Gastrocnemius medialis (tissue), 4 donors: ENCODE measurements at regions of chr11 and their contacts with region 1.

Region 1: DNA sequence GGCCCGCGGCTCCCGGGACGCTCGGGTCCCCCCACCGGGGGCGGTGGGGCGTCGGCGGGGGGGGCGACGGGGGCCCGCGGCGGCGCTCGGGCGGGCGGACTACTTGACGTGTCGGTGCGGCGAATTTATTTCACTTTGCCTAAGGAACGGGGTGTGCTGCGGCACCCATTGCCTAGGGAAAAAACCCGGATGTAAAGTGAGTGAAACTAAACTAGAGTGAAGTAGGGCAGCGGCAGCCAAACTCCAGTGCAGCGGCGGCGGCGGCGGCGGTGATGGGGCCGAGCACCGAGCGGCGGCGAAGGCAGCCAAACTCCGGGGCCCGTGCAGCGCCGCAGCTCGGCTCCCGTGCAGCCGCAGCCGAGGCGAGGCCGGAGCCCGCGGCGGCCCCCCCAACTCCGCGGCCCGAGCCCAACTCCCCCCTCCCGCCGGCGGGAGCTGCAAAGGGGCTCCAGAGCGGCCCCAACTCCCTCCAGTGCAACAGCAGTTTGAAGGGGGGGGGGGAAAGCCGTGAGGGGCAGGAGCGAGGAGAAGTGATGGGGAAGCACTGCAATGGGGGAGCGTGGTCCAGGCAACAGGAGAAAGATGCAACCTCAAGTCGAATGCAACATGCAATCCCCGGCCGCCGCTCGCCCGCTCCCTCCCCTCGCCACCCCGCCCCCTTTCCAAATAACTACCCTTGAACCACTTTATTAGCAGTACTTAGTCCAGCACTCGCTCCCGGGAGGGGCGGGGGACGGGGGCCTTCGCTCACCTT is 647 bp upstream of the PHF21A start:
- DNase-seq: peak; percentile 75 to 82
- ATAC-seq: peak; percentile 55 to 64
- H3K4me3 ChIP-seq: peak overlapping the region; percentile 65 to 88 (median 79)
- H3K27ac ChIP-seq: peak overlapping the region; percentile 96 to 100 (median 98)
- H3K4me1 ChIP-seq: peaks cover 25 to 29% of the 10 kb centered on the region in 2 donors
- H3K27me3 ChIP-seq: no peaks in the 10 kb centered on the region
- CTCF ChIP-seq: peak in 1 of 5 experiments; percentile 14
- POLR2A ChIP-seq: peak in 1 of 2 donors; percentile 24

Region 2: GRCh38 chr11:45804761-45805304 is 317.1 kb before region 1 on chr11 and contains the start of gene SLC35C1:
- in situ Hi-C with region 1: no loop called
- intact Hi-C with region 1: loop called (anchors 1 kb)
- DNase-seq: peak; percentile 96
- ATAC-seq: peak; percentile 87
- H3K4me3 ChIP-seq: peak within 1 kb of the TSS; percentile 76 to 96 (median 86)
- H3K27ac ChIP-seq: peak within 1 kb of the TSS; percentile 86 to 94 (median 91)
- H3K4me1 ChIP-seq: peaks cover 28 to 29% of the 10 kb centered on the region in 2 donors
- H3K27me3 ChIP-seq: no peaks in the 10 kb centered on the region
- CTCF ChIP-seq: peak in 4 of 5 experiments; percentile 25 to 48 (median 34)
- POLR2A ChIP-seq: peak; percentile 88 to 94
- total RNA-seq, gene SLC35C1: 4.8 to 11.7 (median 7.8) TPM

Region 3: GRCh38 chr11:45859661-45860140 is 262.2 kb before region 1 on chr11:
- in situ Hi-C with region 1: no loop called
- intact Hi-C with region 1: loop called (anchors 10 kb)
- DNase-seq: peak; percentile 91 to 96
- ATAC-seq: peak; percentile 70 to 74
- H3K4me3 ChIP-seq: peak overlapping the region in 1 of 4 donors; percentile 19
- H3K27ac ChIP-seq: peak overlapping the region; percentile 91 to 99 (median 99)
- H3K4me1 ChIP-seq: peaks cover 67 to 69% of the 10 kb centered on the region in 2 donors
- H3K27me3 ChIP-seq: no peaks in the 10 kb centered on the region
- CTCF ChIP-seq: no peak
- POLR2A ChIP-seq: peak; percentile 55 to 59

Region 4: DNA sequence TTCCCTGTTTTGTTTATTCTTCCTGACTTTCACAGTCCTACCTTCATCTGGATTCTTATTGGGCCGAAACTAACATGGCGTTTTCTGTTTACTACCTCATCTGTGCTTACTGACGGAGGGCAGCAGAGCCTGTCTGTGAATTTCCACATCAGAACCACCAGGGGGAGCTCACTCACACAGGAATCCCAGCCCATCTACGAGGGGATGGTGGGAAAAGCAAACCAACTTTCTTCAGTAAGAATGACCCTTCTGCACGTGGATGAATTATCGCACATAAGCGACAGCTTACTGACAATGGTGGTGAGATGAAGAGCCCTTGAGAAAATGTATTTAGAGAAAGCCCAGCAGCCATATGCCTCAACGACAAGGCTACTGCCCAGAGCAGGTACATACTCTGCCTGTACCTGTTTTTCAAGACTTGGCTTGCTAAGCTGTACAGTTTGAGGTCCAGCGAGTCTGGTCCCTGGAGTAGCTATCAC is 157.0 kb before region 1 on chr11:
- in situ Hi-C with region 1: no loop called
- intact Hi-C with region 1: loop called (anchors 5 kb)
- DNase-seq: peak in 1 of 2 donors; percentile 52
- ATAC-seq: peak; percentile 90 to 92
- H3K4me3 ChIP-seq: no peak overlapping the region
- H3K27ac ChIP-seq: peak overlapping the region in 1 of 4 donors; percentile 19
- H3K4me1 ChIP-seq: peaks cover 0 to 12% of the 10 kb centered on the region in 2 donors
- H3K27me3 ChIP-seq: no peaks in the 10 kb centered on the region
- CTCF ChIP-seq: peak; percentile 74 to 87 (median 82)
- POLR2A ChIP-seq: no peak

Region 5: DNA sequence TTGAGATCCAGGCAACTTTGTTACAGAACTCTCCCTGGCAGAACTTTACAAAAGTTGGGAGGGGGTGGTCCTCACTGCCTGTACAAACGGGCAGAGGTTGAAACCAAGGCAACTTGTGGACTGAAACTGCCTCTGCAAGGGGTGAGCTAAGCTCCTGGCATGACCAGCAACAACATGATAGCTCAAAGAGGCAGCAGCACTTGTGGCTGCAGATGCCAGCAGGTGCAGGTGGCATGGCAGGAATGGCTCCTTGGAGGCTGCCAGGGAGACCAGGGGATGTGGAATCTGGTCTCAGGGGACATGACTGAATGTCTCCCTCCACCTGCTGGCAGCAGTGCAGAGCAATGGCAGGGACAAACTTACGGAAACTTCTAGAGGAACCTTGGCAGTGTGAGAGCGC is 38.2 kb after region 1 on chr11:
- in situ Hi-C with region 1: no loop called
- intact Hi-C with region 1: no loop called
- DNase-seq: no peak
- ATAC-seq: no peak
- H3K4me3 ChIP-seq: no peak overlapping the region
- H3K27ac ChIP-seq: no peak overlapping the region
- H3K4me1 ChIP-seq: no peaks in the 10 kb centered on the region
- H3K27me3 ChIP-seq: peaks cover 4 to 20% (median 12%) of the 10 kb centered on the region in 3 donors
- CTCF ChIP-seq: no peak
- POLR2A ChIP-seq: no peak

Region 6: GRCh38 chr11:46238967-46239800 is 117.3 kb after region 1 on chr11:
- in situ Hi-C with region 1: no loop called
- intact Hi-C with region 1: loop called (anchors 5 kb)
- DNase-seq: peak; percentile 48 to 71
- ATAC-seq: peak; percentile 69 to 73
- H3K4me3 ChIP-seq: peak overlapping the region; percentile 39 to 65 (median 56)
- H3K27ac ChIP-seq: peak overlapping the region; percentile 1 to 71 (median 68)
- H3K4me1 ChIP-seq: peaks cover 10 to 22% of the 10 kb centered on the region in 2 donors
- H3K27me3 ChIP-seq: peaks cover 0 to 18% (median 6%) of the 10 kb centered on the region in 3 donors
- CTCF ChIP-seq: peak; percentile 95 to 100 (median 99)
- POLR2A ChIP-seq: no peak

Region 7: GRCh38 chr11:46315033-46315738 is 193.3 kb after region 1 on chr11:
- in situ Hi-C with region 1: loop called in 1 of 4 experiments (anchors 10 kb)
- intact Hi-C with region 1: no loop called
- DNase-seq: peak in 1 of 2 donors; percentile 46
- ATAC-seq: peak in 1 of 2 donors; percentile 47
- H3K4me3 ChIP-seq: no peak overlapping the region
- H3K27ac ChIP-seq: no peak overlapping the region
- H3K4me1 ChIP-seq: peaks cover 0 to 5% of the 10 kb centered on the region in 2 donors
- H3K27me3 ChIP-seq: no peaks in the 10 kb centered on the region
- CTCF ChIP-seq: peak; percentile 49 to 91 (median 74)
- POLR2A ChIP-seq: no peak

Region 8: DNA sequence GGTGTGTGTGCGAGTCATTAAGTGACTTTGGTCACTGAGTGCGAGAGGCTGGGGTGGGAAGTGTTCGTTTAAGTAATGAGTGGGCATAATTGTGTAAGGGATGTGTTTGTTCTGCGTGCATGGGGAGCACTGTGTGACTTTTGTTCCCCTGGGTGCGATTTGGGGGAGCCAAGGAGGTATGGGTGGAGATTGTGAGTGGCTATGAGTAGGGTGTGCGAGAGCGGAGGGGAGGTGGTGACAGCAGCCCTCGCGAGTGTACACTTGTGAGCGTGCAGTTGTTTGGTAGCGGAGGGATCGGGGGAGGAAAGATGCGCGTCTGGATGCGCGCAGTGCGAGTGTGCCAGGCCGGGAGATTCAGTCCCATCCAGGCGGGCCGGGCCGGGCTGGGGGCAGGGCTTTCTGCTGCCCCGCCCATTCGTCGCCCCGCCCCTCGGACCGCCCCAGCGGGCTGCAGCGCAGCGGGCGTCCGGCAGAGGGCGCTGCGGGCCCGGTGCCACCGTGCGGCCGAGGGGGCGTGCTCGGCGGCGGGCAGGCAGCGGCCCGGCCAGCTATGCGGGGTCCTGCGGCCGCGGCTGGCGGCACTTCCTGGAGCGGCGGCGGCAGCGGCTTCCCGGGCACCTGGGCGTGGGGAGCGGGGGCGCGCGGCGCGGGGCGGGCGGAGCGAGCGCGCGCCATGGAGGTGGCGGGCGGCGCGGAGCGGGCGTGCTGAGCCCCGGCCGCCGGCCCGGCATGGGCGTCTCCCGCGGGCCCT is 225.2 kb after region 1 on chr11 and contains the start of gene DGKZ:
- in situ Hi-C with region 1: no loop called
- intact Hi-C with region 1: loop called (anchors 10 kb)
- DNase-seq: peak; percentile 59 to 82
- ATAC-seq: peak; percentile 76 to 81
- H3K4me3 ChIP-seq: peak within 1 kb of the TSS; percentile 68 to 82 (median 75)
- H3K27ac ChIP-seq: peak within 1 kb of the TSS; percentile 70 to 79 (median 74)
- H3K4me1 ChIP-seq: peaks cover 18 to 30% of the 10 kb centered on the region in 2 donors
- H3K27me3 ChIP-seq: no peaks in the 10 kb centered on the region
- CTCF ChIP-seq: peak; percentile 62 to 99 (median 99)
- POLR2A ChIP-seq: peak; percentile 64 to 85
- total RNA-seq, gene DGKZ: 127 to 155 (median 131) TPM